GM10248 (cell line): ENCODE measurements at regions of chr1 and their contacts with region 1.

Region 1: GRCh38 chr1:204746838-204747442 is 61.4 kb upstream of the LRRN2 start:
- DNase-seq: peak; percentile 52
- CTCF ChIP-seq: peak; percentile 86

Region 2: DNA sequence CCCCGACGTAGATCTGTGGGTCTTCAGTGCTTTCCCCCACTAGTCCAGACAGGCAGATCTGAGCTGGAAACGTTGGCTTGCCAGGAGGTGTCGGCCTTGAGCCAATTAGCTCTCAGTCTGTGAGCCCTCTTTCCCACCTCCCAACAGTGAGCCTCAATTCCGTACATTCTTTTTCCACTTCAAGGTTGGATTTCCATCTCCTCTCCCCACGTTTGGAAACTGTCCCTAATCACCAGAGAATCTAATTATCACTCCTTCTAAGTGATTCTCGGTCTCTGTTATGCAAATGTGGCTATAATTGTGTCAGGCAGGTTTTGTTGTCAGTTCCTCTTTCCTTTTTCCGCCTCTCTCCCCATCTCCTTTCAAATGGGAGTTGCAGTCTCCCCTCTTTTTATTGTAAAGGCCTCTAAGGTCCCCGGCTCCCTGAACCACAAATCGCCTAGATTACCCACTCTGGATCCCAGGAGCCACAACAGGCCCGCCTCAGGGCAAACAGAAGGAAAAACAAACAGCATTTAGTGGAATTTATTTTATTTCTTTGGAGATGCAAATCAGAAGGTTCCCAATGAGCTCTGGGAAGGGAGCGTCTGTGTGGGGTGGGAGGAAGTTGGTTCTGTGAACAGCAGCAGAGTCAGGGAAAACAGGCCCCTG is 32.0 kb before region 1 on chr1:
- CTCF ChIA-PET with region 1: interaction called, 15 read pairs
- POLR2A ChIA-PET with region 1: no interaction called
- DNase-seq: peak; percentile 55
- CTCF ChIP-seq: peak; percentile 27

Region 3: GRCh38 chr1:204730826-204731459 is 16.0 kb before region 1 on chr1:
- CTCF ChIA-PET with region 1: interaction called, 34 read pairs
- POLR2A ChIA-PET with region 1: no interaction called
- DNase-seq: no peak
- CTCF ChIP-seq: no peak

Region 4: GRCh38 chr1:204837440-204838084 is 90.6 kb after region 1 on chr1:
- CTCF ChIA-PET with region 1: no interaction called
- POLR2A ChIA-PET with region 1: no interaction called
- DNase-seq: peak; percentile 32
- CTCF ChIP-seq: no peak